ENCODE measurements at regions of chr16 and their contacts with region 1.

Region 1: DNA sequence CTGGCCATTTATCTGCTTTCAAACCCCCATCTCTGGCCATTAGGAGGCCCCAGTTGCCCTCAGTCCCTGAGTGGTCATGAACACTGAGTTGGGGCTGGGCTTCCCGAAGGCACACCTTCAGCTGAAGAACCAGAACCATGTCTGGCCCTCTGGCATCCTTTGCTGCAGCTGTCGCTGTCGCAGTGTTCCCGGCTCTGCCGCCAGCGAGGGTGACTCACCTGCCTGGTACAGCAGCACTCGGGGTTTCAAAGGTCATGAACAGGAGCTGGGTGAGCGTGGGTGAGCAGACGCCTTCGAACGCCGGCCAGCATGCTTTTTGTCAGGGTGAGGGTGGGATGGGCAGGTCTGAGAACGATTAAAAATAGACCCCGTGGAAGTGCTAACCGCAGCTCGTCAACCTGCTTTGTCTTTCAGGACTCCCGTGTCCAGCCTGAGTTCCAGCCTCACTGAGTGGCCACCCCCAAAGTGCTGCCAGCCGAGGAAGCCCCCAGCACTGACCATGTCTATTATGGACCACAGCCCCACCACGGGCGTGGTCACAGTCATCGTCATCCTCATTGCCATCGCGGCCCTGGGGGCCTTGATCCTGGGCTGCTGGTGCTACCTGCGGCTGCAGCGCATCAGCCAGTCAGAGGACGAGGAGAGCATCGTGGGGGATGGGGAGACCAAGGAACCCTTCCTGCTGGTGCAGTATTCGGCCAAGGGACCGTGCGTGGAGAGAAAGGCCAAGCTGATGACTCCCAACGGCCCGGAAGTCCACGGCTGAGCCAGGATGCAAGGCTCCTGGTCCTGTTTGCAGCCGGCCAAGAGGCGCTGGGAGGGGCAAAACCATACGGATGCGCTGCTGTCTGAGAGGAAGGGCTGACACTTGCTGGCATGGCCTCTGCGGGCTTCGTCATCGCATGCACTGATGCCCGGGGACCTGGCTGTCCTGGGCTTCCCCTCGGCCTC is 7.6 kb downstream of the SNN start:
- DNase-seq: peak; percentile 60 to 90
- H3K4me3 ChIP-seq: no peak overlapping the region
- H3K27ac ChIP-seq: no peak overlapping the region
- H3K4me1 ChIP-seq: no peaks in the 10 kb centered on the region
- H3K27me3 ChIP-seq: no peaks in the 10 kb centered on the region
- CTCF ChIP-seq: no peak; the same call in 1 of the 2 replicates

Region 2: GRCh38 chr16:11297492-11298142 is 378.2 kb before region 1 on chr16:
- CTCF ChIA-PET with region 1: no interaction called
- POLR2A ChIA-PET with region 1: no interaction called
- intact Hi-C with region 1: no loop called
- DNase-seq: peak in 1 of 2 experiments; percentile 77
- H3K4me3 ChIP-seq: no peak overlapping the region
- H3K27ac ChIP-seq: no peak overlapping the region
- H3K4me1 ChIP-seq: peaks cover 6% of the 10 kb centered on the region; the same call in 1 of the 2 replicates
- H3K27me3 ChIP-seq: no peaks in the 10 kb centered on the region
- CTCF ChIP-seq: no peak

Region 3: GRCh38 chr16:11473703-11474102 is 202.1 kb before region 1 on chr16:
- CTCF ChIA-PET with region 1: no interaction called
- POLR2A ChIA-PET with region 1: interaction called, 17 read pairs
- intact Hi-C with region 1: no loop called
- DNase-seq: no peak
- H3K4me3 ChIP-seq: no peak overlapping the region
- H3K27ac ChIP-seq: no peak overlapping the region
- H3K4me1 ChIP-seq: 0 out of 2 replicates have a peak, but pooled peaks cover 5% of the 10 kb centered on the region
- H3K27me3 ChIP-seq: 0 out of 2 replicates have a peak, but pooled peaks cover 3% of the 10 kb centered on the region
- CTCF ChIP-seq: no peak